CD8-positive, alpha-beta T cell (primary cell): ENCODE measurements at regions of chr16 and their contacts with region 1.

Region 1: DNA sequence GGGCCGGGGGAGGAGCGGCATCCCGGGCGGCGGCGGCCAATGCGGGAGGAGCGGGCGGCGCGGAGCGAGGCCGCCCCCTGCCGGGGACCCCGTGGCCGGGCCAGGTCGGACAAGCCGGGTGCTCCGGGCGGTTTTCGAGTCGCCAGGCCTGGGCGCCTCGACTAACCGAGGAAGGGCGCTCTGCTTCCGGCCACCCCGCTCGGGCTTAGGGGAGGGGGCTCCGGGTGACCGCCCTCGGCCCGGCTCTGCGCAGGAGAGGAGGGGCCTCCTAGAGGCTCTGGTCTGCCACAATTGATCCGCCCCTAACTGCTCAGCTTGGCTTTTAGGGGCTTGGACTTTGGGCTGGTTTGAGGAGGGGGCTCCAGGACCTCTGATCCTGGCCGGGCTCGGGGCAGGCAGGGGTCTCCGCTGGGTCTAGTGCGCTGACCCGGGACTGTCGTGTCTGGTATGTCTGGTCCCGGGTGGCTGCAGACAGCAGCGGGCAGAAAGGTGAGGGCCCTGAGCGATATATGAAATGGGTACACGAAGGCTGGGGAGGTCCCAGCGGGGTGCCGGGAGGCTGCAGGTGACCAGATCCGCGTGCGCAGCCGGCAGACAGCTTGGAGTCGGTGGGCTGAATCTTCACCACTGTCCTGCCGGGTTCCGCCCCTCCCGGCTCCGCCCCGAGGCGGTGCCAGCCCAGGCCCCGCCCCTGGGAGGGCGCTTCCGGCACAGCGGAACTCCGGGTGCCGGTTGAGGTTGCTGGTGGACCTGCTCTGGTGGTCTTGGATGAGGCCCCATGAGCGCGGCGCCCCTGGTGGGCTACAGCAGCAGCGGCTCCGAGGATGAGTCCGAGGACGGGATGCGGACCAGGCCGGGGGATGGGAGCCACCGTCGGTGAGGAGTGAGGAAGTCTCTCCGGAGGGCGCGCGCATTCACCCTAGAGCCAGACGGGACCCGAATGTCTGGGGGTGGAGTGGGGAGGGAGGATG is at the start of gene USB1:
- DNase-seq: peak; percentile 68 to 92 (median 84)
- ATAC-seq: peak; percentile 77
- H3K4me3 ChIP-seq: peak within 1 kb of the TSS; percentile 69 to 82
- H3K4me3 Mint-ChIP-seq: peak within 1 kb of the TSS; percentile 91
- H3K27ac ChIP-seq: peak within 1 kb of the TSS; percentile 61 to 71
- H3K27ac Mint-ChIP-seq: peak within 1 kb of the TSS; percentile 87
- H3K4me1 ChIP-seq: peaks cover 43% of the 10 kb centered on the region
- H3K4me1 Mint-ChIP-seq: peaks cover 64% of the 10 kb centered on the region
- H3K27me3 ChIP-seq: no peaks in the 10 kb centered on the region
- H3K27me3 Mint-ChIP-seq: no peaks in the 10 kb centered on the region
- CTCF ChIP-seq: peak; percentile 77
- total RNA-seq, gene USB1: 24.7 to 27.9 TPM

Region 2: DNA sequence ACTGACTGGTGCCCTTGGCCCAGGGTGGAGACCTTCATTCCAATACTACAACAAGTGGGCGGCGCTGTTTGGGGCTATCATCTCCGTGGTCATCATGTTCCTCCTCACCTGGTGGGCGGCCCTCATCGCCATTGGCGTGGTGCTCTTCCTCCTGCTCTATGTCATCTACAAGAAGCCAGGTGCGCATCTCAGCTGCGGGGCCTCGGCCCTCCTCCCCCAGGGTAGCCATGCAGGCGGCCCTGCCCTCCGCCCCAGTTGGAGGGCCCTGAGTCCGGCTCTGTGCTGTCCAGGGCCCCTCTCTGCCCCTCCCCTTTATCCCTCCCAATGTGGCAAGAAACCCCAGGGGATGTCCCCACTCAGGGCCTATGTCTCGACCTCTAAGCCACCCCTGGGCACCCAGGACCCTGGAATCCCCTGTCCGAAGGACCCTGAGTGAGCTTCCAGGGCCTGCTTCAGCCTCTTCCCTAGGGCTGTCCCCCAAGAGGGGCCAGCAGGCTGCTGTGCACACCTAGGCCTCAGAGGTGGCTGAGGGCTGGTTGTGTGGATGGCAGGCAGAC is 1116.9 kb before region 1 on chr16:
- CTCF ChIA-PET with region 1: no interaction called
- POLR2A ChIA-PET with region 1: no interaction called
- intact Hi-C with region 1: no loop called
- DNase-seq: no peak
- ATAC-seq: no peak
- H3K4me3 ChIP-seq: no peak overlapping the region
- H3K4me3 Mint-ChIP-seq: no peak overlapping the region
- H3K27ac ChIP-seq: no peak overlapping the region
- H3K27ac Mint-ChIP-seq: no peak overlapping the region
- H3K4me1 ChIP-seq: no peaks in the 10 kb centered on the region
- H3K4me1 Mint-ChIP-seq: no peaks in the 10 kb centered on the region
- H3K27me3 ChIP-seq: no peaks in the 10 kb centered on the region
- H3K27me3 Mint-ChIP-seq: no peaks in the 10 kb centered on the region
- CTCF ChIP-seq: no peak

Region 3: DNA sequence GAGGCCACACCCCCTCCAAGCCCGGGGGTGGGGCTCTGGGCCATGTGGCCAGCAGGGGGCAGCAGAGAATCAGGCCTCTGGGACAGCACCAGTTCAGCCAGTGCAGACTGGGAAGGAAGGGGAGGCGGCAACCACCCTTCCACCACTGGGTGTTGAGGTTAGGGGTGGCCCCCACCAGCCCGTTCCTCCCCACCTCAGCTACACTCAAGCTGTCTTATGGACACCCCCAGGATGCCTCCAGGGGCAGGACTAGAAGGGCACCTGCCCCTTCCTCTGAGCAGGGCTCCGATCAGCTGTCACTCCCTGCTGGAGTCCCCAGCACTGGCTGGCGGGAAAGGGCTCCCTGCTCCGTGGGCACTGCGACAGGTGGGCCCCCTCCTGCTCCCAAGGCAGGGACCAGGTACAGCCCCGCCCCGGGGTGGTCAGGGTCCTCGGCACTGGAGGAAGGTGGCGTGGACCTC is 243.6 kb before region 1 on chr16:
- CTCF ChIA-PET with region 1: no interaction called
- POLR2A ChIA-PET with region 1: no interaction called
- intact Hi-C with region 1: loop called in 1 of 2 experiments (anchors 1 kb)
- DNase-seq: peak; percentile 79 to 93 (median 87)
- ATAC-seq: peak; percentile 97
- H3K4me3 ChIP-seq: no peak overlapping the region
- H3K4me3 Mint-ChIP-seq: no peak overlapping the region
- H3K27ac ChIP-seq: peak overlapping the region in 1 of 2 experiments; percentile 14
- H3K27ac Mint-ChIP-seq: no peak overlapping the region
- H3K4me1 ChIP-seq: no peaks in the 10 kb centered on the region
- H3K4me1 Mint-ChIP-seq: no peaks in the 10 kb centered on the region
- H3K27me3 ChIP-seq: no peaks in the 10 kb centered on the region
- H3K27me3 Mint-ChIP-seq: no peaks in the 10 kb centered on the region
- CTCF ChIP-seq: peak; percentile 80

Region 4: GRCh38 chr16:57899771-57900661 is 101.0 kb before region 1 on chr16:
- CTCF ChIA-PET with region 1: interaction called, 143 read pairs
- POLR2A ChIA-PET with region 1: no interaction called
- intact Hi-C with region 1: loop called (anchors 1 kb)
- DNase-seq: peak; percentile 59 to 89 (median 82)
- ATAC-seq: peak; percentile 76
- H3K4me3 ChIP-seq: no peak overlapping the region
- H3K4me3 Mint-ChIP-seq: no peak overlapping the region
- H3K27ac ChIP-seq: no peak overlapping the region
- H3K27ac Mint-ChIP-seq: no peak overlapping the region
- H3K4me1 ChIP-seq: no peaks in the 10 kb centered on the region
- H3K4me1 Mint-ChIP-seq: peaks cover 3% of the 10 kb centered on the region
- H3K27me3 ChIP-seq: no peaks in the 10 kb centered on the region
- H3K27me3 Mint-ChIP-seq: peaks cover 20% of the 10 kb centered on the region
- CTCF ChIP-seq: peak; percentile 92

Region 5: DNA sequence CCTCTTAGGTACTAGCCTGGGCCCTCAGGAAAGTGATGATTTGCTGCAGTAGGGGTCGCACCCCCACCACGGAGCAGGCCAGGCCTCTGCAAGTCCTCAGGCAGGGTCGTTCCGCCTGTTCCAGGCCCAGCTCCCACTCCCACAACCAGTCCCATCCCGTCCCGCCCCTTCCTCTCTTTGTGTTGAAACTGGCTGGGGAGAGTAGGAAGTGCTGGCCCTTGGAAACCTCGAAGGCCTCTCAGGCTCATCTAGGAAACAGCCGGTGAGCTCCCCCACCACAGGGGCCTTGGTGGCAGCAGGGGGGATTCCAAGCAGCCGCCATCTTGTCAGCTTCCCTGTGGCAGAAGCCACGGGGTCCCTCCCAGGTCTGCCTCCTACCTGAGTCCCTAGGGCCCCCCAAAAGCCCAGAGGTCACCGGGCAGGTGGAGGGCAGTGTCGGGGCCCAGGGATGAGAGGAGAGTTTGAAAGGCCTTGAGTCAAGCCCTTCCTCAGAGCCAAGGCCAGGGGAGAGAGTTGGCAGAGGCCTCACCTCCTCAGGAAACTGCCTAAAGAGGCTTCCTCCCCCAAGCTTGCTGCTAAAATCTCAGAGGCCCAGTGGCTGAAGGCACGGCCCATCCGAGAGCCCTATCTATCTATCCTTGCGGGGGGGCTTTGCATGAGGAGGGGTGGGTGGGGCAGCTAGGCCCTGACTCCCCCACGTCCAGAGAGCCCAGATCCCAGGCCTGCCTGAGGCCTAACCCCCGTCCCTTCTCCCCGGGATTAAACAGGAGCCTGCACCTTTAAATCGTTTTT is 46.8 kb after region 1 on chr16:
- CTCF ChIA-PET with region 1: no interaction called
- POLR2A ChIA-PET with region 1: no interaction called
- intact Hi-C with region 1: no loop called
- DNase-seq: no peak
- ATAC-seq: no peak
- H3K4me3 ChIP-seq: no peak overlapping the region
- H3K4me3 Mint-ChIP-seq: no peak overlapping the region
- H3K27ac ChIP-seq: no peak overlapping the region
- H3K27ac Mint-ChIP-seq: no peak overlapping the region
- H3K4me1 ChIP-seq: no peaks in the 10 kb centered on the region
- H3K4me1 Mint-ChIP-seq: no peaks in the 10 kb centered on the region
- H3K27me3 ChIP-seq: no peaks in the 10 kb centered on the region
- H3K27me3 Mint-ChIP-seq: no peaks in the 10 kb centered on the region
- CTCF ChIP-seq: no peak

Region 6: DNA sequence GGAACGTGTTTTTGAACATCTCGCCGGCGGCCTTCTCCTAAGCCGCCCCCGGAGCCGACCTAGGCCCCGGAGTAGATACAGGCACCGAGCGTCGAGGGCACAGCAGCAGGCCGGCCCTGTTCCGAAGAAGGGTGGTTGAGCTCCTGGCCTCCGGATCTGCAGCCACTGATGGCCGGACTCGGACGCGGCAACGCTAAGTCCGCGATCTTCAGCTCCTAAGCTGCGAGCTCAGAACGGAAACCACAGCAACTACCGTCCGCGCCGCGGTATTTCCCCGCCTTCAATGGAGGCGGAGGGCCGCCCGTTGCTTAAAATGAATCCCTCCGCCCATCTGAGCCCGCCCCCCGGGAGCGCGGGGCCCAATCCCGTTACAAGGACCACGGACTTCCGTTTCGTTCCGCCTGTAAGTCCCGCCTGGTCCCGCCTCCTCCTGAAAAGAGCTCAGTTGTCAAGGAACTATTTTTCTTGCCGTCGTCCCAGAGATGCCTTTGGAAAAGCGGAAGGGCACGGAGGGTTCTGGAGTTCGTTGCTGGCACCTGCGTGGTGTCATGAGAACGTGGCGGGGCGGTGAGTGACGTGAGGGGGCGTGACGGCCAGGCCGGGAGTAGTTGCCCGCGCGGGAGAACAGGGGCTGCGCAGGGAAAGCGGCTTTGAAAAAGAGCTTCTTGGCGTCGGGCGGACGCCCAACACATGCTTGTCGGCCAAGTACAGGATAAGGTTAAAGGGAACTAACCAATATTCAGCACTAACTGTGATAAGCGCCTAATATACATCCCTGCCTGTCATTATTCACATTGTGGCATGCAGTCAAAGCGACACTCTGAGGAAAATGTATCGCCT is 128.3 kb after region 1 on chr16 and contains the start of gene CFAP20:
- CTCF ChIA-PET with region 1: no interaction called
- POLR2A ChIA-PET with region 1: interaction called, 3 read pairs
- intact Hi-C with region 1: loop called (anchors 1 to 2 kb)
- DNase-seq: peak; percentile 92 to 98 (median 96)
- ATAC-seq: peak; percentile 90
- H3K4me3 ChIP-seq: peak within 1 kb of the TSS; percentile 75 to 95
- H3K4me3 Mint-ChIP-seq: peak within 1 kb of the TSS; percentile 99
- H3K27ac ChIP-seq: peak within 1 kb of the TSS; percentile 82 to 91
- H3K27ac Mint-ChIP-seq: peak within 1 kb of the TSS; percentile 98
- H3K4me1 ChIP-seq: peaks cover 30% of the 10 kb centered on the region
- H3K4me1 Mint-ChIP-seq: peaks cover 44% of the 10 kb centered on the region
- H3K27me3 ChIP-seq: no peaks in the 10 kb centered on the region
- H3K27me3 Mint-ChIP-seq: no peaks in the 10 kb centered on the region
- CTCF ChIP-seq: no peak
- total RNA-seq, gene CFAP20: 102 to 104 TPM

Region 7: GRCh38 chr16:58392215-58393137 is 391.5 kb after region 1 on chr16 and contains the start of gene GINS3:
- CTCF ChIA-PET with region 1: no interaction called
- POLR2A ChIA-PET with region 1: no interaction called
- intact Hi-C with region 1: loop called in 1 of 2 experiments (anchors 5 kb)
- DNase-seq: peak; percentile 62 to 90 (median 83)
- ATAC-seq: peak; percentile 97
- H3K4me3 ChIP-seq: peak within 1 kb of the TSS; percentile 96 to 98
- H3K4me3 Mint-ChIP-seq: peak within 1 kb of the TSS; percentile 100
- H3K27ac ChIP-seq: peak within 1 kb of the TSS; percentile 69 to 79
- H3K27ac Mint-ChIP-seq: peak within 1 kb of the TSS; percentile 97
- H3K4me1 ChIP-seq: peaks cover 6% of the 10 kb centered on the region
- H3K4me1 Mint-ChIP-seq: peaks cover 16% of the 10 kb centered on the region
- H3K27me3 ChIP-seq: no peaks in the 10 kb centered on the region
- H3K27me3 Mint-ChIP-seq: no peaks in the 10 kb centered on the region
- CTCF ChIP-seq: no peak
- total RNA-seq, gene GINS3: 0.54 to 1.1 TPM